BJ (cell line): ENCODE measurements at regions of chr14 and their contacts with region 1.

Region 1: GRCh38 chr14:74881431-74882361 is at the start of gene DLST:
- DNase-seq: no peak
- H3K4me3 ChIP-seq: peak within 1 kb of the TSS; percentile 61
- H3K27me3 ChIP-seq: no peaks in the 10 kb centered on the region
- CTCF ChIP-seq: no peak
- polyA plus RNA-seq, gene DLST: 125 and 150 TPM in 2 replicates

Region 2: DNA sequence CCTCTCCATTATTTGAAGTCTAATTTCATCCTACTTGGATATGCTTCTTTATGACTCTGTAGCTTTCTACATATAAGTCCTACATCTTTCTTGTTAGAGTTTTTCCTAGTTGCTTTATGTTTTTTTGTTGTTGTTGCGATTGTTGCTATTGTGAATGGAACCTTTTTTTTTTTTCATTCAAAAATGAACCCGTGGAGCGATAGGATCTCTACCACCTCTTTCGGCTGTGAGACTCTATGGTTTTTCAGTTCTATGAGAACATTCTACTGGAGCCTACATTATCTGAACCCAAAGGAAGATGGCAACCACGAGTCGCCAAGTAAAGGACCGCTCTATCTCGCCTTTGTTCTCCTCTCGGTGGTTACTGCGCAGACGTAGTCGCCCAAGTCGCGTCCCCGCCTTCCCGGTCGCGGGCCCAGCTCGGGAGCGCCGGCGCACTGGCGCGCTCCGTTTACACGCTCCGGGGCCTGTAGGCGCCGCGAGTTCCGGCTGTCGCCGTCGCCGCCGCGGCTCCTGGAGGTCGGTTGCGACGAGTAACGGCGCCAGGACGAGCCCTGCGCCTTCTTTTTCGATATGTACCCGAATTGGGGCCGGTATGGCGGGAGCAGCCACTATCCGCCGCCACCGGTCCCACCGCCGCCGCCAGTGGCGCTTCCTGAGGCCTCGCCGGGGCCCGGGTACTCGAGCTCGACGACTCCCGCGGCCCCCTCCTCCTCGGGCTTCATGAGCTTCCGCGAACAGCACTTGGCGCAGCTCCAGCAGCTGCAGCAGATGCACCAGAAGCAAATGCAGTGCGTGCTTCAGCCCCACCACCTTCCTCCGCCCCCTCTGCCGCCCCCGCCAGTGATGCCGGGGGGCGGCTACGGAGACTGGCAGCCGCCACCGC is 118.5 kb before region 1 on chr14 and contains the start of gene YLPM1:
- CTCF ChIA-PET with region 1: no interaction called
- POLR2A ChIA-PET with region 1: no interaction called
- DNase-seq: peak; percentile 78
- H3K4me3 ChIP-seq: peak within 1 kb of the TSS; percentile 96
- H3K27me3 ChIP-seq: no peaks in the 10 kb centered on the region
- CTCF ChIP-seq: peak; percentile 67
- polyA plus RNA-seq, gene YLPM1: 5.5 and 7.2 TPM in 2 replicates

Region 3: GRCh38 chr14:74860906-74861733 is 20.6 kb before region 1 on chr14:
- CTCF ChIA-PET with region 1: interaction called, 118 read pairs
- POLR2A ChIA-PET with region 1: no interaction called
- DNase-seq: no peak
- H3K4me3 ChIP-seq: no peak overlapping the region
- H3K27me3 ChIP-seq: no peaks in the 10 kb centered on the region
- CTCF ChIP-seq: peak; percentile 85

Region 4: DNA sequence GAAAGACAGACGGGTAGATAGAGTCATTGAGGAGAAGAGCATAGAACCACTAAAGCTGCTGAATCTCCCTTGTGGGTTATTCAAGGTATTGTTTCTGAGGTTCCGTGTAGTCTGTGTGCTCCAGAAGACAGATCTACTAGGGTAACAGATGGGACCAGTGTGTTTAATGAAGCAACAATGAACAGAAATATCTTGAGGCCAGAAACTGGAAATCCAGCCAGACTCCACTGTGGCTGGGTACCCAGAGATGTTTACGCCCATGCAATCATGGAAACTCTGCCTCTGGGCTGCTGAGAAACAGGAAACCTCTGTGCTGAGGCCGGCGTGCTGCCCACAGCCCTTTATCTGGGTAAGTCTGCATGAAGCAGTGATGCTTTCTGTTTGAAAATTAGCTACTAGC is 14.0 kb before region 1 on chr14:
- CTCF ChIA-PET with region 1: interaction called, 118 read pairs
- POLR2A ChIA-PET with region 1: interaction called, 6 read pairs
- DNase-seq: no peak
- H3K4me3 ChIP-seq: no peak overlapping the region
- H3K27me3 ChIP-seq: peaks cover 4% of the 10 kb centered on the region; the same call in 1 of the 2 replicates
- CTCF ChIP-seq: no peak